Left cardiac atrium (tissue), 4 donors: ENCODE measurements at regions of chr21 and their contacts with region 1.

Region 1: DNA sequence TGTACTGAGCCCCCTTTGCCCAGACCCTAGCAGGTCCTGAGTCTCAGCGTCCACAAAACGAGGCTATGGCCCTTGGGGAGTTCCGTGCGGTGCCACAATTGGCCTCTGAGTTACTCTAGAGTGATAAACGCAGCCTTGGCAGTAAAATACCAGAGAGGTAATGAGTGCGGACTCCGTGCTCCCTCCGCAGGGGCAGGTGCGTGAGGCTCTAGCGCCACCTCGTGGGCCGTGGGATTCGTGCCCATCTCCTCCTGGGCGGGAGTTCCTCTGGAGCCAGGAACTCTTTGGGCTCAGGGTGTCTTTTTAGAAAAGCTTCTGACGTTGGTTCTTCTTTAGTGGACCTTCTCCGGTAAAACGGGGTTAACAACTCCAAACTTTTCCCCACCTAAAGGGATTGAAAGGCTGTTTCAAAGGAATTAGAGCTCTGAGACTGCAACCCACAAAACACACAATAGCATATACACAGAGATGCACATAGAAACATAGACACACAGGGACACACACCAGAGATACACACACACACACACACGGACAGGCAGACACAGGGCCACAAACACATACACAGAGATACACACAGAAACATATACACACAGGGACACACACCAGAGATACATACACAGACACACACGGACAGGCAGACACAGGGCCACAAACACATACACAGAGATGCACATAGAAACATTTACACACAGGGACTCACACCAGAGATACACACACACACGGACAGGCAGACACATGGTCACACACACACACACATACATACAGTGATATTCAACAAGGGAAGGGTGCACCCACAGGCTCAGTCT is 99.4 kb downstream of the KCNJ15 start:
- DNase-seq: peak; percentile 83
- ATAC-seq: peak; percentile 86 to 88

Region 2: GRCh38 chr21:37675202-37675801 is 680.9 kb before region 1 on chr21:
- intact Hi-C with region 1: loop called in 1 of 2 experiments (anchors 10 kb)
- DNase-seq: peak; percentile 70
- ATAC-seq: peak; percentile 74 to 82

Region 3: GRCh38 chr21:37700641-37701202 is 655.5 kb before region 1 on chr21:
- intact Hi-C with region 1: loop called in 1 of 2 experiments (anchors 10 kb)
- DNase-seq: peak; percentile 27
- ATAC-seq: peak; percentile 50 to 89

Region 4: GRCh38 chr21:37711836-37712568 is 644.2 kb before region 1 on chr21:
- intact Hi-C with region 1: loop called (anchors 5 to 10 kb)
- DNase-seq: peak; percentile 77
- ATAC-seq: peak; percentile 88 to 90

Region 5: GRCh38 chr21:38159355-38159754 is 196.8 kb before region 1 on chr21:
- intact Hi-C with region 1: loop called (anchors 2 kb)
- DNase-seq: peak; percentile 69
- ATAC-seq: peak; percentile 69 to 70

Region 6: DNA sequence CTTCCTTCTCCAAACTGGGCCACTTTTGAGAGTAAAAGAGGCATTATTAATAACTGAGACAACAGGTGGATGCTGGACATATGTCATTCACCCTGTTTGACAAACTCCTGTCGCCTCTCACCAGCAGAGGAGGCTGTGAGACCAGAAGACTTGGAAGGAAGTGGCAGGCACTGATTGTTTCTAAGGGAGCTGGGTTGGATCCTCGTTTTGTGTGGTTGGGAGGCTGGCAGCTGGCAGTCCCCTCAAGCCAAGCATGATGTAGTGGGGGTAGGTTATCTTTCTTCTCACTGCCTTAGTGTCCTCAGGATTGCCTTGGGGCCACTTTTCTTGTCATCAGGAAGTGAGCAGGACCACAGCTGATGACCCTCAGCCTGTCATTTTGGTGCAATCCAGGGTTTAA is 185.9 kb before region 1 on chr21:
- intact Hi-C with region 1: loop called in 1 of 2 experiments (anchors 5 kb)
- DNase-seq: peak; percentile 24
- ATAC-seq: peak in 1 of 2 donors; percentile 41

Region 7: GRCh38 chr21:38219049-38219628 is 137.1 kb before region 1 on chr21:
- intact Hi-C with region 1: loop called (anchors 1 to 5 kb)
- DNase-seq: peak; percentile 79
- ATAC-seq: peak; percentile 88 to 96

Region 8: DNA sequence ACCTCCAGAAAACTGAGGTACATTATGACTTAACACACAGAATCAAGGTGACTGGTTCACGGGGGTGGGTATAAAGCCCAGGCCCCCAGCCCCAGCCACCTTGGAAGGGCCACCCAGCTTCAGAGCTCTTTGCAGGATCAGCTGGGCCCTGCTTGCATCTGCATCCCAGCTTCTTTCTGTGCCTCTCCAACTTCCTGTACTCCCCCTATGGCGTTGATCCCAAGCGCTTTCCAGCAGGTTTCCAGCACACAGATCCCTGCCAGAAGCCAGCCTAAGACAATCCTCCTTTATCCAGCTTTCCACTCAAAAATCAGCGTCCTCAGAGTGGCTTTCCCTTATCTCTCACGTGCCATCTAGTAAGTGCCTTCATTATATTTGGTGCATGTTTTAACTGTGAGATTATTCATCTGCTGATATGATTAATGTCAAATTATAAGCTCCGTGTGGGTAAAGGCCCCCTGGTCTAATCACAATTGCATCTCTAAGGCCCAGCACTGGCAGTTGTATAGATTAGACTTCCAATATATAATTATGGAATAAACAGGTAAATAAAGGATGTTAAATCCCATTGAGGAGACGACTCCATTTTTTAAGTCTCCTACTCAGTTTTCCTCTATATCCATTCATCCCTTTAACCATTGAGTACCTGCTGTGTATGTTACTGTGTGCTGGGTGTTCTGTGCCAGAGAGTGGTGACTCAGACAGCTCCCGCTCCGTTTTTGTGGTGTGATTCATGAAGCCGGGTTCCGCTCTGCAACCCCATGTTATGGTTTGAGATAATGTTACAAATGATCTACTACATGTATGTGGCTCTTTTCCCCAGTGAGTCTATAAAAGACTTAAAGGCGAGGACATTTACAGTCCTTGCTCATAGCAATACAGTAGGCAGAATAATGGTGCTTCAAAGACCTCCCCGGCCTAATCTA is 1898.6 kb after region 1 on chr21:
- intact Hi-C with region 1: no loop called
- DNase-seq: no peak
- ATAC-seq: no peak